Naive thymus-derived CD4-positive, alpha-beta T cell (primary cell): ENCODE measurements at regions of chr12 and their contacts with region 1.

Region 1: GRCh38 chr12:25151476-25151875 is 43.5 kb downstream of the DNAI7 start:
- DNase-seq: no peak
- ATAC-seq: no peak
- H3K4me3 ChIP-seq: no peak overlapping the region
- H3K4me3 Mint-ChIP-seq: no peak overlapping the region
- H3K27ac ChIP-seq: no peak overlapping the region
- H3K27ac Mint-ChIP-seq: peak overlapping the region in 1 of 9 donors; percentile 0
- H3K4me1 ChIP-seq: no peaks in the 10 kb centered on the region
- H3K4me1 Mint-ChIP-seq: peaks cover 0 to 7% (median 6%) of the 10 kb centered on the region in 7 donors
- H3K27me3 ChIP-seq: no peaks in the 10 kb centered on the region
- H3K27me3 Mint-ChIP-seq: peaks cover 0 to 3% (median 0%) of the 10 kb centered on the region in 5 donors

Region 2: GRCh38 chr12:24991209-24992049 is 160.0 kb before region 1 on chr12:
- CTCF ChIA-PET with region 1: interaction called, 4 read pairs
- POLR2A ChIA-PET with region 1: no interaction called
- intact Hi-C with region 1: loop called (anchors 1 kb)
- DNase-seq: peak in 7 of 9 donors; percentile 53 to 75 (median 64)
- ATAC-seq: peak; percentile 97
- H3K4me3 ChIP-seq: no peak overlapping the region
- H3K4me3 Mint-ChIP-seq: no peak overlapping the region
- H3K27ac ChIP-seq: no peak overlapping the region
- H3K27ac Mint-ChIP-seq: no peak overlapping the region
- H3K4me1 ChIP-seq: no peaks in the 10 kb centered on the region
- H3K4me1 Mint-ChIP-seq: peaks cover 0 to 2% (median 0%) of the 10 kb centered on the region in 7 donors
- H3K27me3 ChIP-seq: no peaks in the 10 kb centered on the region
- H3K27me3 Mint-ChIP-seq: peaks cover 0 to 7% (median 6%) of the 10 kb centered on the region in 5 donors

Region 3: GRCh38 chr12:25186788-25187397 is 35.4 kb after region 1 on chr12:
- CTCF ChIA-PET with region 1: interaction called, 7 read pairs
- POLR2A ChIA-PET with region 1: interaction called, 4 read pairs
- intact Hi-C with region 1: loop called in 1 of 2 experiments (anchors 1 kb)
- DNase-seq: peak in 4 of 9 donors; percentile 20 to 37 (median 29)
- ATAC-seq: peak; percentile 74
- H3K4me3 ChIP-seq: peak overlapping the region; percentile 54
- H3K4me3 Mint-ChIP-seq: peak overlapping the region; percentile 77 to 93 (median 90)
- H3K27ac ChIP-seq: peak overlapping the region; percentile 54
- H3K27ac Mint-ChIP-seq: peak overlapping the region; percentile 72 to 99 (median 96)
- H3K4me1 ChIP-seq: peaks cover 3 to 16% of the 10 kb centered on the region in 2 donors
- H3K4me1 Mint-ChIP-seq: peaks cover 9 to 21% (median 18%) of the 10 kb centered on the region in 7 donors
- H3K27me3 ChIP-seq: no peaks in the 10 kb centered on the region
- H3K27me3 Mint-ChIP-seq: peaks cover 0 to 2% (median 0%) of the 10 kb centered on the region in 5 donors

Region 4: GRCh38 chr12:25352083-25352918 is 200.8 kb after region 1 on chr12:
- CTCF ChIA-PET with region 1: no interaction called
- POLR2A ChIA-PET with region 1: no interaction called
- intact Hi-C with region 1: no loop called
- DNase-seq: no peak
- ATAC-seq: no peak
- H3K4me3 ChIP-seq: no peak overlapping the region
- H3K4me3 Mint-ChIP-seq: no peak overlapping the region
- H3K27ac ChIP-seq: no peak overlapping the region
- H3K27ac Mint-ChIP-seq: no peak overlapping the region
- H3K4me1 ChIP-seq: no peaks in the 10 kb centered on the region
- H3K4me1 Mint-ChIP-seq: peaks cover 0 to 8% (median under 1%) of the 10 kb centered on the region in 7 donors
- H3K27me3 ChIP-seq: no peaks in the 10 kb centered on the region
- H3K27me3 Mint-ChIP-seq: peaks cover 0 to 16% (median 0%) of the 10 kb centered on the region in 5 donors